Panc1 (cell line): ENCODE measurements at regions of chr12 and their contacts with region 1.

Region 1: GRCh38 chr12:121351820-121352681 is at the start of gene ANAPC5:
- DNase-seq: peak; percentile 89
- ATAC-seq: peak; percentile 99
- H3K4me3 ChIP-seq: peak within 1 kb of the TSS; percentile 86 to 100
- H3K27ac ChIP-seq: peak within 1 kb of the TSS; percentile 89
- H3K4me1 ChIP-seq: peaks cover 3% of the 10 kb centered on the region; the same call in 1 of the 2 replicates
- H3K27me3 ChIP-seq: no peaks in the 10 kb centered on the region
- CTCF ChIP-seq: no peak
- total RNA-seq, gene ANAPC5: 101 TPM

Region 2: DNA sequence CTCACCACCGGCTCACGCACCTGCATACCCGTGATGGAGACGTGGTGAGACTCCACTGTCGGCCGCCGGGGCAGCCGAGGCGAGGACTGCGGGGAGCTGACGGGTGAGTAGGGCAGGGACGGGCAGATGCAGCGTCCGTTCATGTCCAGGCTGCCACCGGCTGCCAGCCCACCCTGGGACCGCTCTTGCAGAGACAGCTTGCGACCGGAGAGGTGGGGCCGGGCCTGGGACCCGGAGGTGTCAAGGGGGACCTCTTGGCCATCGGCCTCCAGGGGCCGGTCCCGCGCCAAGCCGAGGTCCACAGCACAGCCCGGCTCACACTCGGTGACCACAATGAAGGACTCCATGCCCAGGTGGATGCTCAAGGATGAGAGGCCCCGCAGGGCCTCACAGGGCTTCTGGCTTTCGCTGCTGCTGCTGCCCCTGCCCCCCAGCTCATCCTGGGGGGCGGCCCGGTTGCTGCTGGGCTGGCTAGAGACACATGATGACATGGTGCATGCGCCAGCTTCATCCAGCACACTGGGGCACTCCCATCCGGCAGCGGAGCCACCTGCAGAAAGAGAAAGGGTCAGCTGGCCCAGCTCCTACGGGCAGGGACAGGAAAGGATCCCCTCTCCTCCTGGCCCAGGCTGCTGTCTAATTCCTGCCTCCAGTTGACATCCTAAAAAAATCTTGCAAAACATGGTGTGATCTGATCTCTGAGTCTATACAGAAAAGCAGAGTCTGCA is 77.9 kb before region 1 on chr12:
- CTCF ChIA-PET with region 1: no interaction called
- POLR2A ChIA-PET with region 1: no interaction called
- in situ Hi-C with region 1: no loop called
- intact Hi-C with region 1: no loop called
- DNase-seq: no peak
- ATAC-seq: no peak
- H3K4me3 ChIP-seq: no peak overlapping the region
- H3K27ac ChIP-seq: no peak overlapping the region
- H3K4me1 ChIP-seq: no peaks in the 10 kb centered on the region
- H3K27me3 ChIP-seq: no peaks in the 10 kb centered on the region
- CTCF ChIP-seq: no peak

Region 3: DNA sequence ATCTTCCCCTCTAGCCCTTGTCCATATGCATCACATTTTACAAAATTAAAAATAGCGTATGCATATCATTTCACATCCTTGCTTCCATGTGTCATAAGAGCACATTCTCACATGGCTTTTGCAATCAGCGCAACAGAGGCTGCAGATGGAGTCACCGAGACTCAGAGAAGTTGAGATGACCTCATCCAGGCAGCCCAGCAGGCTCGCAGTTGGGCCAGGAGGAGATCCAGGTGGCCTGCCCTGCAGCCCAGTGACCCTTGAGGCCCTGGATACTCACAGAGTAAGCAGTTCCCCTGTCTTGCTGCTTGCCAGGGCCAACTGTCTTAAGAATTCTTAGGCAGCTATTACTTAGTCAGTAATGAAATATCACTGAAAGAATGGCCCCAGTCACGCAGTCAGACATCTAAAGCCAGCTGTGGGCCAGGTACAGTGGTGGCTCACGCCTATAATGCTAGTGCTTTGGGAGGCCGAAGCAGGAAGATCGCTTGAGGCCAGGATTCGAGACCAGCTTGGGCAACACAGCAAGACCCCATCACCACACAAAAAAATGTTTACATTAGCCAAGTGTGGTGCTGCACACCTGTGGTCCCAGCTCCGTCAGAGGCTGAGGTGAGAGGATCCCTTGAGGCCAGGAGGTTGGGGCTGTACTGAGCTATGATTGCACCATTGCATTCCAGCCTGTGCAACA is 64.6 kb before region 1 on chr12:
- CTCF ChIA-PET with region 1: no interaction called
- POLR2A ChIA-PET with region 1: no interaction called
- in situ Hi-C with region 1: no loop called
- intact Hi-C with region 1: no loop called
- DNase-seq: no peak
- ATAC-seq: no peak
- H3K4me3 ChIP-seq: no peak overlapping the region
- H3K27ac ChIP-seq: no peak overlapping the region
- H3K4me1 ChIP-seq: no peaks in the 10 kb centered on the region
- H3K27me3 ChIP-seq: no peaks in the 10 kb centered on the region
- CTCF ChIP-seq: no peak

Region 4: DNA sequence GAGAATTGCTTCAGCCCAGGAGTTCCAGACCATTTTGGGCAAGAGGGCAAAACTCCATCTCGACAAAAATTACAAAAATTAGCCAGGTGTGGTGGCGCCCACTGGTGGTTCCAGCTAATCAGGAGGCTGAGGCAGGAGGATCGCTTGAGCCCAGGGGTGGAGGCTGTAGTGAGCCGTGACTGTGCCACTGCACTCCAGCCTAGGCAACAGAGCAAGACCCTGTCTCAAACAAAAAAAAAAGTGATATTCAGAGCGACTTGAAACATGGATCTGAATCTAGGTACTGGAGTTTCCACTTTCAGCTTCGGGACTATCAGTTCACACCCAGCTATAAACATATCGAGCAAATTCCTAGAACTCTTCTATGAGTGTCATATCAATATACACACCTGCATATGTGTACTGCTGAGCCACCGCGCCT is 31.6 kb after region 1 on chr12:
- CTCF ChIA-PET with region 1: no interaction called
- POLR2A ChIA-PET with region 1: interaction called, 11 read pairs
- in situ Hi-C with region 1: no loop called
- intact Hi-C with region 1: no loop called
- DNase-seq: no peak
- ATAC-seq: no peak
- H3K4me3 ChIP-seq: no peak overlapping the region
- H3K27ac ChIP-seq: no peak overlapping the region
- H3K4me1 ChIP-seq: no peaks in the 10 kb centered on the region
- H3K27me3 ChIP-seq: no peaks in the 10 kb centered on the region
- CTCF ChIP-seq: no peak

Region 5: GRCh38 chr12:121399391-121400331 is 47.6 kb after region 1 on chr12 and contains the start of gene RNF34:
- CTCF ChIA-PET with region 1: no interaction called
- POLR2A ChIA-PET with region 1: interaction called, 3 read pairs
- in situ Hi-C with region 1: no loop called
- intact Hi-C with region 1: loop called (anchors 5 kb)
- DNase-seq: peak; percentile 78
- ATAC-seq: peak; percentile 99
- H3K4me3 ChIP-seq: peak within 1 kb of the TSS; percentile 79 to 90
- H3K27ac ChIP-seq: peak within 1 kb of the TSS; percentile 87
- H3K4me1 ChIP-seq: peaks cover 12% of the 10 kb centered on the region; the same call in 1 of the 2 replicates
- H3K27me3 ChIP-seq: no peaks in the 10 kb centered on the region
- CTCF ChIP-seq: no peak
- total RNA-seq, gene RNF34: 52.4 TPM